ENCODE measurements at regions of chr6 and their contacts with region 1.

Region 1: DNA sequence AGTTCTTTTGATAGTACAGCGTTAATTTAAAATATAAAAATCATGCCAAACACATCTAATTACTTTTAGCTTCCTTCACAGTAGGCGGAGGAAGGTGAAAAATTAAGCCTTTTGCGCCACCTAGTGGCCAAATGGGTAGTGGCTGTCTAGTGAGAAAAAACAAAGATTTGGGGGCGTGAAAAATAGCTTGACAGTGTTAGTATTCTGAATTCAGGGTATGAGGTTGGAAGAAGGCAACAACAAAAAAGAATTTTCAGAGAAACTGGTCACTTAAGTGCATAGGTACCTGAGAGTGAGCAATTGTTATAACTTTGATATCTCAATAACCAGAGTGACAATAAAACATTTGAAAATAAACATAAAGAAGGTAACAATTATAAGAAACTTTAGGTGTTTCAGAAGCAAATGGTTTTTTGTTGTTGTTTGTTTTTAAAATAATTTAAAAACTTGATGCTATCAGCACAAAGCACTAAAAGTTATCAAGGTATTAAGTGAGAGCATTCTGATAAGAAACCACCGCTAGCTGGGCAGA is 14.3 kb downstream of the PSMB9 start:
- DNase-seq: peak; percentile 91
- ATAC-seq: peak; percentile 85
- H3K4me3 Mint-ChIP-seq: no peak overlapping the region
- H3K27ac Mint-ChIP-seq: no peak overlapping the region
- H3K4me1 Mint-ChIP-seq: peaks cover 34% of the 10 kb centered on the region
- H3K27me3 Mint-ChIP-seq: peaks cover 9% of the 10 kb centered on the region

Region 2: GRCh38 chr6:32774426-32774825 is 93.9 kb before region 1 on chr6:
- CTCF ChIA-PET with region 1: no interaction called
- DNase-seq: no peak
- ATAC-seq: no peak
- H3K4me3 Mint-ChIP-seq: no peak overlapping the region
- H3K27ac Mint-ChIP-seq: no peak overlapping the region
- H3K4me1 Mint-ChIP-seq: peaks cover 5% of the 10 kb centered on the region
- H3K27me3 Mint-ChIP-seq: peaks cover 67% of the 10 kb centered on the region

Region 3: DNA sequence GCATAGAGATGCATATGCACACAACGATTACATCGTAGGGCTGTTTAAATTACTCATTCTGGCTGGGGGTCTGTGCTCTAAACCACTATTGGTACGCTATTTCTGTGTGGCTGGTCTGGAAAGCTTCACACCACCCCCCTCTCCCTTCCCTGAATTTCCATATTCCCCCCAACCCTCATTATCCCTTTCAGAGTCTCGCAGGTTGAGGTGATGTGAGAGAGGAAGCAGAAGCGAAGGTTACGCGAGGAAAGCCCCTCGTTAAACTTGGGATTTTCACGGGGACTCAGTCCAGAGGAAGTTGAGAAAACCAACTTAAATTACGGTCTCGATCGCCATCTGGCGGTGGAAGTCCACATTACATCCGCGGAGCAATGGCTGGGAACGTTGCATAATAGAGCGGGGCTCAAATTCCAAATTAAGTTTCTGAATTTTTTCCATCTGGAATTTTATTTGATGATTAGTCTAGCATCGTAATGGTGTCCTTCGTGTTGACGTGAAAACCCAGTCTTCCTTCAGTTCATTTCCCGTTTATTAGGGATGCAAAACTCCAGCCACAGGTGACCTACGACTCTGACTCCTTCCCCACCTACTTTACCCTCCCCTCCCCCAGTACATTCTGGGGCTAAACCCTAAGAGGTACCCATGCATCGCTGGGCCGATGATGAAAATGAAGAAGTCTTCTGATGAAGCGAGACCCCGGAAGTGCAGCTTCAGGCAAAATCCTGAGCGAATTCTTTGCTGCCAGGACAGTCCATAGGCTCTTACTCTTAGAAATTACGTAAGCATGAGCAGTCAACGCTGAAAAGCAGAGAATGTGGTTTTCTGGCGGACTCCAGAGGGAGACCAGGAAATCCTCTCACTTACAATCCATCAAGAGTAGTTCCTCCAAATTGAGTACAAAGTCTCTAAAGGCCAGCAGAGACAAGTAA is 71.2 kb before region 1 on chr6:
- CTCF ChIA-PET with region 1: interaction called, 18 read pairs
- DNase-seq: peak; percentile 83
- ATAC-seq: peak; percentile 77
- H3K4me3 Mint-ChIP-seq: peak overlapping the region; percentile 61
- H3K27ac Mint-ChIP-seq: no peak overlapping the region
- H3K4me1 Mint-ChIP-seq: peaks cover 29% of the 10 kb centered on the region
- H3K27me3 Mint-ChIP-seq: peaks cover 81% of the 10 kb centered on the region

Region 4: GRCh38 chr6:32825966-32826365 is 42.4 kb before region 1 on chr6:
- CTCF ChIA-PET with region 1: interaction called, 27 read pairs
- DNase-seq: no peak
- ATAC-seq: no peak
- H3K4me3 Mint-ChIP-seq: no peak overlapping the region
- H3K27ac Mint-ChIP-seq: no peak overlapping the region
- H3K4me1 Mint-ChIP-seq: peaks cover 29% of the 10 kb centered on the region
- H3K27me3 Mint-ChIP-seq: no peaks in the 10 kb centered on the region

Region 5: GRCh38 chr6:32853541-32854375 is 14.6 kb before region 1 on chr6 and contains the starts of genes PSMB9 and TAP1:
- CTCF ChIA-PET with region 1: interaction called, 124 read pairs
- DNase-seq: peak; percentile 97
- ATAC-seq: peak; percentile 84
- H3K4me3 Mint-ChIP-seq: peak within 1 kb of the TSS; percentile 99
- H3K27ac Mint-ChIP-seq: peak within 1 kb of the TSS; percentile 100
- H3K4me1 Mint-ChIP-seq: peaks cover 61% of the 10 kb centered on the region
- H3K27me3 Mint-ChIP-seq: no peaks in the 10 kb centered on the region
- total RNA-seq, gene PSMB9: 402 to 473 TPM
- total RNA-seq, gene TAP1: 407 to 417 TPM

Region 6: GRCh38 chr6:32940656-32941213 is 72.4 kb after region 1 on chr6 and contains the start of gene HLA-DMB:
- CTCF ChIA-PET with region 1: interaction called, 11 read pairs
- DNase-seq: peak; percentile 80
- ATAC-seq: peak; percentile 94
- H3K4me3 Mint-ChIP-seq: peak within 1 kb of the TSS; percentile 87
- H3K27ac Mint-ChIP-seq: peak within 1 kb of the TSS; percentile 98
- H3K4me1 Mint-ChIP-seq: peaks cover 67% of the 10 kb centered on the region
- H3K27me3 Mint-ChIP-seq: no peaks in the 10 kb centered on the region
- total RNA-seq, gene HLA-DMB: 22.7 to 31.2 TPM